A549 (cell line): ENCODE measurements at regions of chr12 and their contacts with region 1.

Region 1: GRCh38 chr12:54379401-54380201 is 4.9 kb downstream of the ZNF385A start:
- DNase-seq: peak; percentile 92 to 96
- ATAC-seq: peak; percentile 74 to 91
- H3K4me3 ChIP-seq: peak overlapping the region; percentile 61
- H3K27ac ChIP-seq: peak overlapping the region; percentile 81 to 96
- H3K4me1 ChIP-seq: peaks cover 43% of the 10 kb centered on the region
- CTCF ChIP-seq: peak; percentile 100
- EP300 ChIP-seq: no peak
- POLR2A ChIP-seq: no peak
- RAD21 ChIP-seq: peak; percentile 94 to 96

Region 2: GRCh38 chr12:54214553-54215406 is 164.8 kb before region 1 on chr12:
- CTCF ChIA-PET with region 1: interaction called, 31 read pairs
- POLR2A ChIA-PET with region 1: no interaction called
- DNase-seq: peak; percentile 78 to 95
- ATAC-seq: peak; percentile 70 to 88
- H3K4me3 ChIP-seq: peak overlapping the region; percentile 35
- H3K27ac ChIP-seq: peak overlapping the region; percentile 27 to 77; a peak in 4 of 6 replicates
- H3K4me1 ChIP-seq: peaks cover 9% of the 10 kb centered on the region; the same call in 1 of the 3 replicates
- CTCF ChIP-seq: peak; percentile 100
- EP300 ChIP-seq: no peak
- POLR2A ChIP-seq: no peak
- RAD21 ChIP-seq: peak; percentile 38 to 67

Region 3: DNA sequence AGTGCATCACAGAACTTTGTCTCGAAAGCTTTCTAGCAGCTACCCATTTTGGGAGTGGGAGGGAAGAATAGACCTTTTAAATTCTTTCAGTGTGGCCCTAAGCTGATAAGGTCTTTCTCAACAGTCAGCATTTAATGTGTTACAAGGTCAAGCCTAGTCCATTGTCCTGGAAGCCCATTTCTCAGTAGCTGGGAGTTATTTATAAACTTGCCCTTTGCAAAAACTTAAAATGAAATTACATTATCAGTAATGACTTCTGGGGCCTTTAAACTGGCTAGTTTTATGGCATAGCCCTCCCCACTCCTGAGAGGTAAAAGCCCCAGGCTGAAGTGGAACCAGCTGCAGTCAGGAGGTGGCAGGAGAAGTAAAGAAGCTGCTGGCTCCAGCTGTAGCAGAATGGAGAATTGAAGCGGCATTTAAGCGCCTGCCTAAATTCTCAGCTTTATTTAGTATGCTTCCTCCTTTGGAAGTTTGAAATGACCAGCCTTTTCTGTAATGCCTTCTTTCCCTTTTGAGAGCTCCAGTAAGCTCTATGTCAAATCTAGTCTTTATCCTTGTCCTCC is 42.2 kb before region 1 on chr12:
- CTCF ChIA-PET with region 1: interaction called, 28 read pairs
- POLR2A ChIA-PET with region 1: no interaction called
- DNase-seq: no peak
- ATAC-seq: no peak
- H3K4me3 ChIP-seq: no peak overlapping the region
- H3K27ac ChIP-seq: no peak overlapping the region
- H3K4me1 ChIP-seq: 0 out of 3 replicates have a peak, but pooled peaks cover 2% of the 10 kb centered on the region
- CTCF ChIP-seq: no peak
- EP300 ChIP-seq: no peak
- POLR2A ChIP-seq: no peak
- RAD21 ChIP-seq: no peak

Region 4: DNA sequence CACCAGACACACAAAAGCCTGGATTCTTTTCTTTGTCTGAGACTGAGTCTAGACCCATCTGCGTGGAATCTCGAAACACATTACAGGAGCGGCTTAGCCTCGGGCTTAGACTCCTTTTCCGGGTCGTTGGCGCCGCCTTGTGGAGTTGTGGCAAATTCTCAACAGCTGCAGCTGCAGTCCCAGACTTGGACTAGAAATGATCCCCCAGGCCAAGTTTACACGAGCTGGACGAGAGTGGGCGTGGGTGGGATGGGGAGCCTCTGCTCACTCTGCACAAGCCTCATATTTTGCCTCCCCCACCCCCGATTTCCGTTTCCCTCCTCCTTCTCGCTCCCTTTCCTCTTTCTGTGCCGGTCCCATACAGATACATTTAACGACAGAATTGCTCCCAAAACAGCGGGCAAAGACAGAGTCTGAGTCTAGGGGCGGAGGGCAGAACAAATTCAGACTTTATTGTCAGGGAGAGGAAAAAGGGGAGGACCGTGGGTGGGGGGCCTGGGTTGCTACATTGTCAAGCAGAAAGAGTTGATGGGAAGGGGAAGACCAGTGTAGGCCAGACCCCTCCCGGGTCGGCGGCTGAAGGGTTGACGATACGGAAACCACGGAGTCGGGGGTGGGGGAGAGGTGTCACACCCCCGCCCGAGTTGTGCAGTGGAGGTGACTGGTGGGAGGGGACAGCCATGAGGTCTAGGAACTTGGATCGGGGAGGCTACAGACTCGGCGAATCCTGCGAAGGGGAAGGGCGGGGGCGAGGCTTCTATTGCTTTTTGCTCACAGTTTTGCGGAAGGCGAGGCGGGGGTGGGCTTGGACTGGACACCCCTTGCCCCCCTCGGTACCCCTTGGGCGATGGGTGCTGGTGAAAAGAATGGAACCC is 10.7 kb before region 1 on chr12:
- CTCF ChIA-PET with region 1: interaction called, 146 read pairs
- POLR2A ChIA-PET with region 1: interaction called, 10 read pairs
- DNase-seq: peak; percentile 82 to 87
- ATAC-seq: peak; percentile 63 to 78
- H3K4me3 ChIP-seq: no peak overlapping the region
- H3K27ac ChIP-seq: peak overlapping the region; percentile 46 to 84
- H3K4me1 ChIP-seq: peaks cover 52% of the 10 kb centered on the region
- CTCF ChIP-seq: peak; percentile 91
- EP300 ChIP-seq: no peak
- POLR2A ChIP-seq: no peak
- RAD21 ChIP-seq: peak; percentile 86 to 94

Region 5: DNA sequence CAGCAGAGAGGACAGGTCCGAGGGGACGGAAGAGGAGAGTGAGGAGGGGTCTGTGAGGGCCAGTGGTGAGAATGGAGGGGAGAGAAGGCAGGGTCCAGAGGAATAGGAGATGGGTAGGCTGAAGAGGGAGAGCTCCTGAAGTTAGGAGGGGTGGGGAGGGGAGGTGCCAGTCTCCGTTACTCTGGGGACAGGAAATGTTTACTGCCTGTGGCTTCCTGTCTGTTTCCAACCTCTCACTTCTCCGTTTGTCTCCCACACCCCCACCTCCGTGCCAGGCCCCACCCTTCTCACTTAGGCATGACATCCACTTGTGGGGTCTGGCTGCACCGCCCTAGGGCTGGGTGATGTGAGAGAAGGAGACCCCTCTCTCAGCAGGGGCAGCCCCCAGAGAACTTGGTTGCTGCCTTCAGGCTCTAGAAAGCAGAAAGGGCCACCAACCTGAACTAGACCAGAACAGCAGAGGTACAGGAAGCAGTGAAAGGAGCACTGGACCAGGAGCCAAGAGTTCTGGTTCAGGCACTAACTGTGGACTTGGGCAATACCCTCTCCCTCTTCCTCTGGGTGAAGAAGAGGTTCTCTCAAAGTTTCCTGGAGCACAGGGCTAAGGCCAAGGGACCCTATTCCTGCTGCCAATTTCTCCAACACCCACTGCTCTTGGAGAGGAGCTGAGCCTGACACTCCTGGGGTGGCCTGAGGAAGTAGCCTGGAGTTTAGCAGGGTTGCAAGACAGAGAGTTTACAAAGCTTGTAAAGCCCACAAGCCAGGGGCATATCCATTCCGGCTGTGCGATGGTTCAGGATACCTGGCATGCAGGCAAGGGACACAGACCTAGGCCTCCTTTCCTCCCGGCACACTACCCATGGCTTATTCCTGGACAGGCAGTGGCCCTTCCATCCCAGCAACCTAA is 33.9 kb after region 1 on chr12:
- CTCF ChIA-PET with region 1: interaction called, 15 read pairs
- POLR2A ChIA-PET with region 1: no interaction called
- DNase-seq: no peak
- ATAC-seq: no peak
- H3K4me3 ChIP-seq: no peak overlapping the region
- H3K27ac ChIP-seq: peak overlapping the region in 1 of 2 experiments; percentile 47; a peak in 1 of 6 replicates
- H3K4me1 ChIP-seq: peaks cover 56% of the 10 kb centered on the region
- CTCF ChIP-seq: no peak
- EP300 ChIP-seq: no peak
- POLR2A ChIP-seq: no peak
- RAD21 ChIP-seq: no peak

Region 6: DNA sequence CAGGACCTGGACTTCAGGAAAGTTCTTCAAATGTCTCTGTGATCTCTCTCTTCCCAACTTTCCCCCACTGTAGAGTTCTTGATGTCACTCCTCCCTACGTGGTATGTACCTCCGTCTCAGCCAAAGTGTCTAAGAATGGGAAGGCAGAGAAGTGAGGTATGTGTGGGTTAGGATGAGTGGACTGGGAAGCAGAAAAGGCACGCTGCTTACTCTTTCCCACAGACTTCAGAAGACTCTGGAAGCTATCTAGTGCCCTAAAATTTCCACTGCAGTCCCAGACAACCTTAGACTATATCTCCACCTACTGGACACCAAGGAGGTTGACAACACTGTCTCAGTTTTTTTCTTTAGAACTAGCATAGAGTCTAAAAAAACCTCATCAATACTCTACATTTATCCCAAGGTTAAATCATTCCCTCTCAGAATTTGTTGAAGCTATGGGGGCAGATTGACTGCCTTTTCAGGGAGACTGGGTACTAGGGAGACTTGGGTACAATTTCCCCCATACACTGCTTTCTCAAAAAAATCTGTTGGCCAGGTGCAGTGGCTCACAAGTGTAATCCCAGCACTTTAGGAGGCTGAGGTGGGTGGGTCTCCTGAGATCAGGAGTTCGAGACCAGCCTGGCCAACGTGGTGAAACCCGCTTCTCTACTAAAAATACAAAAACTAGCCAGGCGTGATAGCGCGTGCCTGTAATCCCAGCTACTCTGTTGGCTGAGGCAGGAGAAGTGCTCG is 60.1 kb after region 1 on chr12:
- CTCF ChIA-PET with region 1: interaction called, 77 read pairs
- POLR2A ChIA-PET with region 1: interaction called, 3 read pairs
- DNase-seq: peak; percentile 69 to 83
- ATAC-seq: peak; percentile 87
- H3K4me3 ChIP-seq: no peak overlapping the region
- H3K27ac ChIP-seq: peak overlapping the region in 1 of 2 experiments; percentile 23; a peak in 1 of 6 replicates
- H3K4me1 ChIP-seq: peaks cover 14% of the 10 kb centered on the region
- CTCF ChIP-seq: peak; percentile 96
- EP300 ChIP-seq: no peak
- POLR2A ChIP-seq: no peak
- RAD21 ChIP-seq: peak; percentile 94 to 99

Region 7: DNA sequence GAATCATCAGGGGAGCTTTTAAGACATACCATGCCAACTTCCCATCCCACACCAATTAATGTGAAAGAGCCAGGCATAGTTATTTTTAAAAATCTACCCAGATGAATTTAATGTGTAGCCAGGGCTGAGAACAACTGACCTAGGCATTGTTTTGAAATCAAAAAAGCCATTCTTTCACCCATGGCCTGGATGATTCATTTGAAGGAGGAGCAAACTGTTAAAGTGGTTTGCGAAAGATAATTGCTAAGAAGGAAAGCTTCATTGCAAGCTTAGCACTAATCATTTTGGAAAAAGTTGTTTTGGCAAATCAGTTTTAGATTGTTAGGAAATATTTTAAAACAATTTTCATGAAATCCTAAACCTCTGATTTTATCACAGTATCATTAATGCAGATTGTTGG is 95.9 kb after region 1 on chr12:
- CTCF ChIA-PET with region 1: no interaction called
- POLR2A ChIA-PET with region 1: no interaction called
- DNase-seq: no peak
- ATAC-seq: no peak
- H3K4me3 ChIP-seq: no peak overlapping the region
- H3K27ac ChIP-seq: no peak overlapping the region
- H3K4me1 ChIP-seq: no peaks in the 10 kb centered on the region
- CTCF ChIP-seq: no peak
- EP300 ChIP-seq: no peak
- POLR2A ChIP-seq: no peak
- RAD21 ChIP-seq: no peak

Region 8: GRCh38 chr12:54579696-54580333 is 200.2 kb after region 1 on chr12:
- CTCF ChIA-PET with region 1: no interaction called
- POLR2A ChIA-PET with region 1: no interaction called
- DNase-seq: peak; percentile 76 to 85
- ATAC-seq: peak; percentile 88 to 98
- H3K4me3 ChIP-seq: no peak overlapping the region
- H3K27ac ChIP-seq: peak overlapping the region in 1 of 2 experiments; percentile 55; a peak in 1 of 6 replicates
- H3K4me1 ChIP-seq: no peaks in the 10 kb centered on the region
- CTCF ChIP-seq: peak; percentile 84
- EP300 ChIP-seq: no peak
- POLR2A ChIP-seq: no peak; the same call in 1 of the 2 replicates
- RAD21 ChIP-seq: peak; percentile 69 to 76